Panc1 (cell line): ENCODE measurements at regions of chr3 and their contacts with region 1.

Region 1: DNA sequence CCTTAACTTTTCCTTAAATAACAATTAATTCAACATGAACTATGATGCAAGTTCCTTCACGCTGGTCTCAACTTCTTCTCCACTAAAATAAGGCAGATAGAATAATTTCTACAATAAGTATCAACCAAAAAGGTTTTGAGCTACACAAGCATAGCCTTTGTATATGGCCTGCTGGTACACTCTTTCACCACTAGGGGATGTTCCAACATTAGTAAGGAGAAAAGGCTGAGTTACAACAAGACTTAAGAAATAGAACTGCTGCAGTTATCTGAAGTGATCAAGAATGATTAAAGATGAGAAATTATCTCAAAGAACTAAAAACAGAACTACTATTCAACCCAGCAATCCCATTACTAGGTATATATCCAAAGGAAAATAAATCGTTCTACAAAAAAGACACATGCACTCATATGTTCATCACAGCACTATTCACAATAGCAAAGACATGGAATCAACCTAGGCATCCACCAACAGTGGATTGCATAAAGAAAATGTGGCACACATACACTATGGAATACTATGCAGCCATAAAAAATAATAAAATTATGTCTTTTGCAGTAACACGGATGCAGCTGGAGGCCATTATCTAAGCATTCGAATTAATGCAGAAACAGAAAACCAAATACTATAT is 14.4 kb downstream of the ATP13A3 start:
- DNase-seq: peak; percentile 67
- ATAC-seq: peak; percentile 90
- H3K4me3 ChIP-seq: no peak overlapping the region
- H3K27ac ChIP-seq: no peak overlapping the region
- H3K4me1 ChIP-seq: peaks cover 9% of the 10 kb centered on the region
- H3K27me3 ChIP-seq: no peaks in the 10 kb centered on the region
- CTCF ChIP-seq: peak; percentile 99

Region 2: DNA sequence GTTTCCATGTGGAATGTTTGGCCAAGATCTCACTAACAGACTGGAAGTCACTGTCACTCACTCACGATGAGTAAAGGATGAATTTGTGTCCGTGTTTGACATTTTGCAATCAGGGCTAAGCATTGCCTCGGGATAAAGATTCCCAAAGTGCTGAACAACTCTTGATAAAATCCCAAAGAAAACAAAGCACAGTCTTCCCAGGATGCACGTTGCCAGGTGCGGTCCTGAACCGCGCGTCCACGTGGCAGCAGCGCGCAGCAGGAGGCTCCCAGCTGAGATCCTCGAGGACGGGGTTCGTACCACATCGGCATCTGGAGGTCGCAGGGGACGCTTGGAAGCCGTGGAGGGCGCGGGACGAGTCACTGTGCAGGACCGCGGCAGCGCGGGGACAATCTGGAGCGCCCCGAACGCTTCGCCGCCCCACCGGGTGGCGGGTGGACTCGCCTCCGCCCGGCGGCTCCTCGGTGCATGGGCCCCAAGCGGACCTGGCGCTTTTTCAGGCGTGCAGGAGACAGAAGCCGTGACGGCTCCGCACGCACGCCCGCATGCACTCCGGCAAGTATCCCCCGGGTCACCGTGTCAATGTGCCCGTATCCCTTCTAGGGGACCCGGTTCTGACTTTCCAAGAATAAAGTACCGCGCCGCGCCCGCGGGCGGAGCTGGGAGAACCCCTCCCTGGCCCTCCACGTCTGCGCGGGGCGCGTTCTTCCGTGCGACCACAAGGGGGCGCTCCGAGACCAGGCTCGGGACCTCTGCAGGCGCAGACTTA is 139.0 kb before region 1 on chr3:
- CTCF ChIA-PET with region 1: no interaction called
- POLR2A ChIA-PET with region 1: no interaction called
- in situ Hi-C with region 1: no loop called
- intact Hi-C with region 1: no loop called
- DNase-seq: no peak
- ATAC-seq: peak; percentile 97
- H3K4me3 ChIP-seq: peak overlapping the region; percentile 52 to 58
- H3K27ac ChIP-seq: no peak overlapping the region
- H3K4me1 ChIP-seq: no peaks in the 10 kb centered on the region; the same call in 1 of the 2 replicates
- H3K27me3 ChIP-seq: no peaks in the 10 kb centered on the region
- CTCF ChIP-seq: peak; percentile 99

Region 3: DNA sequence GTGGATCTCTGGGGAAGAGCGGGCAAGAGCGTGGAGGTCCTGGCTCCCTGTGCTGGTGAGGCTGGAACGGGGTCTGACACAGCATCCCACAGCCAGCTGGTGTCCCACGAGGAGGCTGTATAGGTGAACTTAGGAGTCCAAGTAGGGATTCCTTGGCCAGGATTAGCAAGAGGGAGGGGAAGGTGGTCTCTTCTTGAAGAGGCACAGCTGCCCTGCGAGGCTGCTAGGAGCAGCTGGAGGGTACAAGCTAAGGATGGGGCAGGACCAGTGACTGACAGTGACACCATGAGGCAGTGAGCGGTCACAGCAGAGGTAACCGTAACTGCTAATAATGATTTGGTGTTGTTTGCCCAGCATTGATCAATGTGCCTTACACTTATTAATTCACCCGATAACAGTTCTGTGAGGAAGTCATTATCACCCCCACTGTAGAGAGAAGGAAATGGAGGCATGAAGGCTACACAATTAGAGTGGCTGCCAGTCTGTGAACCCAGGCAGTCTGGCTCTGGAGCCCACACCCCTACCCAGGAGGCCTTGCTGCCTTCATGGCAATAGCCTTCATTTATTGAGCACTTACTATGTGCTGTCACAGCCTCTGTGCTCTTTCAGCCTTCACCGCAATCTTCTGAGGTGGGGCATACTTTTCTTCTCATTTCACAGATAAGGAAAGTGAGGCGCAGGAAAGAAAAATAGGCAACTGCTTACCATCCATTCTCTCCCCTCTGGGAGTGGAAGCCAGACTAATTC is 101.5 kb after region 1 on chr3:
- CTCF ChIA-PET with region 1: interaction called, 10 read pairs
- POLR2A ChIA-PET with region 1: interaction called, 5 read pairs
- in situ Hi-C with region 1: no loop called
- intact Hi-C with region 1: loop called (anchors 2 kb)
- DNase-seq: no peak
- ATAC-seq: peak; percentile 68
- H3K4me3 ChIP-seq: no peak overlapping the region
- H3K27ac ChIP-seq: peak overlapping the region; percentile 52
- H3K4me1 ChIP-seq: peaks cover 35% of the 10 kb centered on the region
- H3K27me3 ChIP-seq: no peaks in the 10 kb centered on the region
- CTCF ChIP-seq: peak; percentile 85; the same call in 1 of the 2 replicates

Region 4: GRCh38 chr3:194592798-194593752 is 120.7 kb after region 1 on chr3:
- CTCF ChIA-PET with region 1: interaction called, 21 read pairs
- POLR2A ChIA-PET with region 1: no interaction called
- in situ Hi-C with region 1: no loop called
- intact Hi-C with region 1: loop called (anchors 2 kb)
- DNase-seq: peak; percentile 97
- ATAC-seq: peak; percentile 94
- H3K4me3 ChIP-seq: no peak overlapping the region
- H3K27ac ChIP-seq: peak overlapping the region; percentile 79
- H3K4me1 ChIP-seq: peaks cover 24% of the 10 kb centered on the region
- H3K27me3 ChIP-seq: no peaks in the 10 kb centered on the region
- CTCF ChIP-seq: no peak